CD4-positive, alpha-beta memory T cell (primary cell): ENCODE measurements at regions of chr1 and their contacts with region 1.

Region 1: GRCh38 chr1:26472901-26473845 is 933 bp downstream of the HMGN2 start:
- DNase-seq: peak; percentile 95 to 96 (median 95)
- H3K4me3 ChIP-seq: peak overlapping the region; percentile 53 to 85
- H3K4me3 Mint-ChIP-seq: peak overlapping the region; percentile 83 to 92 (median 89)
- H3K27ac ChIP-seq: peak overlapping the region; percentile 96
- H3K27ac Mint-ChIP-seq: peak overlapping the region; percentile 82 to 100 (median 93)
- H3K4me1 ChIP-seq: peaks cover 49% of the 10 kb centered on the region
- H3K4me1 Mint-ChIP-seq: peaks cover 33 to 66% (median 46%) of the 10 kb centered on the region in 4 donors
- H3K27me3 ChIP-seq: no peaks in the 10 kb centered on the region
- H3K27me3 Mint-ChIP-seq: no peaks in the 10 kb centered on the region

Region 2: DNA sequence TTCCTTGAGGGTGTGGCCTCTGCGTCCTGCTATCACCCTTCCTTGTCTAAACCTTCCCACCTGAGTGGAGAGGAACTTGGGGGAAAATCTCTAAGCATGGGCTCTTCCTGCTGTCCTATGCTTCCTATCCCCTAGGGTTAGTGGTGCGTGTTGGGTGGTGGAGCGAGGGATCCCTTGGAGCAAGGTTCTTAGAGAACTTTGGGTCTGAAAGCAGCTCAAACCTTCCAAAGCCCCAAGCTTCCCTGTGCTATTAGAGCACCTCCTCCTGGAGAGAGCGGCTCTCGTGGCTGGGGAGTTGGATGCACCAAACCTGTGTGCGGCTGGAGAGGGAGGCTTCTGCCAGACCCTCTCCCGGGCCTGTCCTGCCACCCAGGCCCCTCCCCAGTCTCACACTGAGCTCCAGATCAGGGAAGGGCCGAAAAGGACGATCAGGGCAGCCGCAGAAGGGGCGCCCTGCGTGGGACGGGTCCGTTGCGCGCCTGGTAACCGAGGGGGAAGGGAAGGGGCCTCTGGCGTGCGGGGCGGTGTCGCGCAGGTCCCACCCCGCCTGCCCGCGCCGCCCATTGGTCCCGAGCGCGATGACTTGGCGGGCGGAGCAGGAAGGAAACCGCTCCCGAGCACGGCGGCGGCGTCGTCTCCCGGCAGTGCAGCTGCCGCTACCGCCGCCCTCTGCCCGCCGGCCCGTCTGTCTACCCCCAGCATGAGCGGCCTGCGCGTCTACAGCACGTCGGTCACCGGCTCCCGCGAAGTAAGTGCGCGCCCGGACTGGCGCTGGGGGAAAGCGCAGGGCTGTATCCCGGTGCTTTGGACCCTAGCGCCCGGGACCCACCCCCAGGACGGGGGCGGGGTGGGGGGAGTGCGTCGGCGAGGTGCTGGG is 193.5 kb before region 1 on chr1 and contains the start of gene SH3BGRL3:
- CTCF ChIA-PET with region 1: interaction called, 3 read pairs
- POLR2A ChIA-PET with region 1: interaction called, 10 read pairs
- intact Hi-C with region 1: loop called (anchors 2 kb)
- DNase-seq: peak; percentile 83 to 88 (median 86)
- H3K4me3 ChIP-seq: peak within 1 kb of the TSS; percentile 50 to 92
- H3K4me3 Mint-ChIP-seq: peak within 1 kb of the TSS; percentile 85 to 96 (median 90)
- H3K27ac ChIP-seq: peak within 1 kb of the TSS; percentile 82
- H3K27ac Mint-ChIP-seq: peak within 1 kb of the TSS; percentile 94 to 98 (median 97)
- H3K4me1 ChIP-seq: peaks cover 88% of the 10 kb centered on the region
- H3K4me1 Mint-ChIP-seq: peaks cover 58 to 90% (median 76%) of the 10 kb centered on the region in 4 donors
- H3K27me3 ChIP-seq: no peaks in the 10 kb centered on the region
- H3K27me3 Mint-ChIP-seq: no peaks in the 10 kb centered on the region
- total RNA-seq, gene SH3BGRL3: 293 to 305 TPM

Region 3: DNA sequence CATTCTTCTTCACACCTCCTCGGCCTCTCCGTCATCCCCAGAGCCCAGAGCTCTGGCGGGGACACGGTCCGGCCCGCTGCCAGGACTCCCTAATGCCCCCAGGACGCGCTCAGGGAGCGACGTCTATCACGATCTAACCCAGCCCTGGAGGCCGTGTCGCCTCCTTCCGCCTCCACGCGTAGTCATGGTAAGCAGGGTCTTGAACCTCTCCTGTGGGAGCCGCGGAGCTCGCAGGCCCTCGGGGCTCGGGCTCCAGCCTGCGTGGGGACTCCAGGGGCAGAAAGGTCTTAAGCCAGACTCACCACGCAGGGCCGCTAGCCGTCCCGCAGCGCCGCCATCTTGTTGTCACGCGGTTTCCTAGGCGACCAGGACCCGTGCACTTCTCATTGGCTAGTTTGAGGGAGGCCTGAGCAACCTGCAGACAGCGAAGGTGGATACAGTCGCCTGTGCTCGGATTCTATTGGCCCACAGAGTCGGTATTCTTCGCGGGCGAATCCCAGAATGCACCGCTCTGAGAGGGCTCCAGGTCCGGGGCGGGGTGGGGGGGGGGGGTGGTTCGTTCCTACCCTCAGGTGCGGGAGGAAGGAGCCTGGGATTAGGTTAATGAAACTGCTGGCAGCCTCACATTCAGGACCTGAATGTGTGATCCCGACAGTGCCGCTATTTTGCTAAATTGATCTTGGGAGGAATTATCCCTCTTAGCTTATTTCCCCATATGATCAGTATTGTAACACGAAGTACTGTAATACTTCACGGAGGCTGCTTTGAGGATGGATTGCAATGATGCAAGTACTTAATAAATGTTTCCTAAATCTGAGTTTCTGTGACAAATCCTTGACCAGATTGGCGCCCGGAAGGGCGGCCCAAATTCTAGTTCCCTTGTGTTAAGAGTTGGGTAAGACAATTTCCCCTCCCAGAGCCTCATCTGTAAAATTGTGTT is 166.6 kb before region 1 on chr1 and contains the start of gene UBXN11:
- CTCF ChIA-PET with region 1: no interaction called
- POLR2A ChIA-PET with region 1: no interaction called
- intact Hi-C with region 1: loop called (anchors 1 kb)
- DNase-seq: peak; percentile 90 to 97 (median 91)
- H3K4me3 ChIP-seq: peak within 1 kb of the TSS; percentile 69 to 86
- H3K4me3 Mint-ChIP-seq: peak within 1 kb of the TSS; percentile 95 to 99 (median 98)
- H3K27ac ChIP-seq: peak within 1 kb of the TSS; percentile 74
- H3K27ac Mint-ChIP-seq: peak within 1 kb of the TSS; percentile 92 to 99 (median 98)
- H3K4me1 ChIP-seq: peaks cover 42% of the 10 kb centered on the region
- H3K4me1 Mint-ChIP-seq: peaks cover 25 to 40% (median 33%) of the 10 kb centered on the region in 4 donors
- H3K27me3 ChIP-seq: no peaks in the 10 kb centered on the region
- H3K27me3 Mint-ChIP-seq: no peaks in the 10 kb centered on the region
- total RNA-seq, gene UBXN11: 115 to 117 TPM

Region 4: GRCh38 chr1:26431979-26432695 is 41.0 kb before region 1 on chr1 and contains the start of gene DHDDS:
- CTCF ChIA-PET with region 1: interaction called, 7 read pairs
- POLR2A ChIA-PET with region 1: interaction called, 40 read pairs
- intact Hi-C with region 1: loop called (anchors 1 kb)
- DNase-seq: peak; percentile 97 to 99 (median 97)
- H3K4me3 ChIP-seq: peak within 1 kb of the TSS; percentile 85 to 88
- H3K4me3 Mint-ChIP-seq: peak within 1 kb of the TSS; percentile 89 to 98 (median 94)
- H3K27ac ChIP-seq: peak within 1 kb of the TSS; percentile 69
- H3K27ac Mint-ChIP-seq: peak within 1 kb of the TSS; percentile 71 to 98 (median 97)
- H3K4me1 ChIP-seq: peaks cover 28% of the 10 kb centered on the region
- H3K4me1 Mint-ChIP-seq: peaks cover 10 to 25% (median 17%) of the 10 kb centered on the region in 4 donors
- H3K27me3 ChIP-seq: no peaks in the 10 kb centered on the region
- H3K27me3 Mint-ChIP-seq: peaks cover 2 to 4% of the 10 kb centered on the region in 2 donors
- total RNA-seq, gene DHDDS: 44.4 to 46.2 TPM

Region 5: GRCh38 chr1:26529655-26530409 is 56.7 kb after region 1 on chr1 and contains the start of gene RPS6KA1:
- CTCF ChIA-PET with region 1: no interaction called
- POLR2A ChIA-PET with region 1: no interaction called
- intact Hi-C with region 1: no loop called
- DNase-seq: peak; percentile 51 to 67 (median 54)
- H3K4me3 ChIP-seq: peak within 1 kb of the TSS; percentile 65 to 75
- H3K4me3 Mint-ChIP-seq: peak within 1 kb of the TSS; percentile 89 to 98 (median 91)
- H3K27ac ChIP-seq: peak within 1 kb of the TSS; percentile 62
- H3K27ac Mint-ChIP-seq: peak within 1 kb of the TSS; percentile 78 to 94 (median 87)
- H3K4me1 ChIP-seq: peaks cover 44% of the 10 kb centered on the region
- H3K4me1 Mint-ChIP-seq: peaks cover 16 to 48% (median 30%) of the 10 kb centered on the region in 4 donors
- H3K27me3 ChIP-seq: no peaks in the 10 kb centered on the region
- H3K27me3 Mint-ChIP-seq: no peaks in the 10 kb centered on the region
- total RNA-seq, gene RPS6KA1: 106 to 108 TPM

Region 6: DNA sequence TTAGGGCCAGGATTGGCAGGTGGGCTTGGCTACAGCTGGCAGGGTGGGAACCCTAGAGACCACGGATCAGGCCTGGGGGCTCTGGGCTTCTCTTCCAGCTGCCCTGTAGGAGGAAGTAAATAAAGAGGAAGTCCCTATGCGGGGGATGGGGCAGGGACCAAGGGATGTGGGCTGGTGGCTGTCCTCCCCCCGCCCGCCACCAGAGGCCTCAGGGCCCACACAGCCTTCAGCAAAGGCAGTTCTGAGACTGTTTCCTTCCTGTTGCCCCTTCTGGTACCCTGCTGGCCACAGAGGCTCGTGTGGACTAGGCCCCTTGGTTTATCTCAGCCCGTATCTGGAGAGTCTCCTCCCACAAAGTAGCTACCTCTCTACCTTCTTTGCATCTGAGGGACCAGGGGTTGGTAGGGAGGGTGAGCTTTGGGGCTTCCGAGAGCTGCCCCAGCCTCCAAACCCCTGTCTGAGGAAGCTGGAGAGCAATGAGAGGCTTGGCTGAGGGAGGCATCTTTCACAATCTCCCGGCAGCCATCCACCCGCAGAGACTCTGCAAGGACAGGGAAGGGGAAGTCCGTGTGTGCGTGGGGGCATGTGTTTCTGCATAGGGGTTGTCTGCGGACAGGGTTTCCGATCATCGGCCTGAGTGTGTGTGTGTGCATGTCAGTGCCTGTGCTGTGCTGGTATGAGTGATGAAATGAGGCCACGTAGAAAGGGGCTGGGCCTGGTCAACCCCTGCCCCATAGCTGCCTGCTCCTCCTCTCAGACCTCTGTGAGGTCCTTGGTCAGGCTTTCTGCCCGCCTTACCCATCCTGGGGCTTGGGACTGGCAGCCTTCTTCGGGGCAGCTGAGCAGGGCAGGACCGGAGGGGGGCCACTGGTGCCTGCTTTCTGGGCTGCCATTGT is 68.9 kb after region 1 on chr1:
- CTCF ChIA-PET with region 1: interaction called, 4 read pairs
- POLR2A ChIA-PET with region 1: interaction called, 14 read pairs
- intact Hi-C with region 1: loop called (anchors 2 kb)
- DNase-seq: peak; percentile 70 to 90 (median 71)
- H3K4me3 ChIP-seq: peak overlapping the region; percentile 12 to 34
- H3K4me3 Mint-ChIP-seq: peak overlapping the region; percentile 78 to 89 (median 84)
- H3K27ac ChIP-seq: peak overlapping the region; percentile 75
- H3K27ac Mint-ChIP-seq: peak overlapping the region; percentile 94 to 98 (median 95)
- H3K4me1 ChIP-seq: peaks cover 97% of the 10 kb centered on the region
- H3K4me1 Mint-ChIP-seq: peaks cover 61 to 96% (median 84%) of the 10 kb centered on the region in 4 donors
- H3K27me3 ChIP-seq: no peaks in the 10 kb centered on the region
- H3K27me3 Mint-ChIP-seq: no peaks in the 10 kb centered on the region

Region 7: DNA sequence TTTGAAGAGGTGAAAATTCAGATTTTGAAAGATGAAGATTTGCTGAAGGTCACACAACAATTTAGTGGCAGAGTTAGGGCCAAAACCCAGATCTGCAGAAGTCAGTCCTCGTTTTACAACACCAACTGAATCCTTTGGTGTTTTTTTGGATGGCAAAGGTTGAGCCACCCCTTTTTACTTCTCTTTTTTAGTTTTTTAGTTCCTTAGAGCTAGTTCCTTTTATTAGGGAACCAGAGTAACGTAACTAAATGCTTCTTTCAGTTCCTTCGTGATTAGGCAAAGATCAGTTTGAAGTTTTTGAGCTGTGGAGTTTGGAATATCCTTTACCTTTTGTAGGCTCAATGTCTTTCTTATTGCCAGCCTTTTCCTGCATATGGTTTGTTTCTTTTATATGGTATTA is 154.8 kb after region 1 on chr1:
- CTCF ChIA-PET with region 1: no interaction called
- POLR2A ChIA-PET with region 1: no interaction called
- intact Hi-C with region 1: no loop called
- DNase-seq: no peak
- H3K4me3 ChIP-seq: no peak overlapping the region
- H3K4me3 Mint-ChIP-seq: no peak overlapping the region
- H3K27ac ChIP-seq: no peak overlapping the region
- H3K27ac Mint-ChIP-seq: no peak overlapping the region
- H3K4me1 ChIP-seq: no peaks in the 10 kb centered on the region
- H3K4me1 Mint-ChIP-seq: peaks cover 0 to 4% (median 0%) of the 10 kb centered on the region in 4 donors
- H3K27me3 ChIP-seq: no peaks in the 10 kb centered on the region
- H3K27me3 Mint-ChIP-seq: no peaks in the 10 kb centered on the region